GM10248 (cell line): ENCODE measurements at regions of chr20 and their contacts with region 1.

Region 1: GRCh38 chr20:2005831-2006426 is 12.1 kb upstream of the PDYN start:
- DNase-seq: peak; percentile 61
- CTCF ChIP-seq: no peak

Region 2: GRCh38 chr20:1965520-1966351 is 40.2 kb before region 1 on chr20:
- CTCF ChIA-PET with region 1: interaction called, 10 read pairs
- POLR2A ChIA-PET with region 1: no interaction called
- DNase-seq: peak; percentile 84
- CTCF ChIP-seq: peak; percentile 91

Region 3: DNA sequence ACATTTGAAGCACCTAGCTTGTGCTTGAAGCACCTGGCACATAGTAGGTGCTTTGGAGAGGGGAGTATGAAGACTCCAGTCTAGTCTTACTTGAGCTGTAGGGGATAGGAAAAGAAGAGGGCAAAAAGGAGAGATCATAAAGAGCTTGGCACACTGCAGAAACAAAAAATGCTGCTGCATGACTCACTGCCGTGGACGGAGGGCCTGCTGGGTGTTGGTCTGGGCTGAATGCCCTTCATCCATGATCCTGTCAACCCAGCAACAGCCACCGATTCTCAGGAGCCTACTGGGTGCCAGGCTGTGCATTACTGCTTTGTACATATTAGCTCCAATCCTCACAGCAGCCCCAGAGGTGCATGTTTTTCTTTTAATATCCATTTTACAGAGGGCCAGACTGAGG is 18.1 kb before region 1 on chr20:
- CTCF ChIA-PET with region 1: interaction called, 11 read pairs
- POLR2A ChIA-PET with region 1: no interaction called
- DNase-seq: no peak
- CTCF ChIP-seq: no peak

Region 4: DNA sequence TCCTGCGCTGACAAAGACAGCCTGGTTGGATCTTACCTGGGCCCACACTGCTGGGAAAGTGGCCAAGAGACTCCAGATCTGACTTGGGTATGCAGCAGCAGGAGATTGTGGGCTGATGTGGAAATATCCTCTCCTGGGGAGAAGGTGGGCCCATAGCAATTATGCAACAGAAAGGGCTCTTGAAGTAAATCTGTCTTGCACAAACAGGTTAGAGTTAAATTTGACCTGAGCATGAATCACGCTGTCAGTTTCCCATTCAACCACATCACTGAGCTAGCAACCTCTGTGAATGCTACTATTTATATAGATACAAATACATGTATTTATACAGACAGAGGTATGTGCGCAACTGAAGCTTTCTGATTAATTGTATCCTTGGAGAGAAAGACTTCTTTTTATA is 16.2 kb after region 1 on chr20:
- CTCF ChIA-PET with region 1: interaction called, 23 read pairs
- POLR2A ChIA-PET with region 1: no interaction called
- DNase-seq: no peak
- CTCF ChIP-seq: no peak

Region 5: DNA sequence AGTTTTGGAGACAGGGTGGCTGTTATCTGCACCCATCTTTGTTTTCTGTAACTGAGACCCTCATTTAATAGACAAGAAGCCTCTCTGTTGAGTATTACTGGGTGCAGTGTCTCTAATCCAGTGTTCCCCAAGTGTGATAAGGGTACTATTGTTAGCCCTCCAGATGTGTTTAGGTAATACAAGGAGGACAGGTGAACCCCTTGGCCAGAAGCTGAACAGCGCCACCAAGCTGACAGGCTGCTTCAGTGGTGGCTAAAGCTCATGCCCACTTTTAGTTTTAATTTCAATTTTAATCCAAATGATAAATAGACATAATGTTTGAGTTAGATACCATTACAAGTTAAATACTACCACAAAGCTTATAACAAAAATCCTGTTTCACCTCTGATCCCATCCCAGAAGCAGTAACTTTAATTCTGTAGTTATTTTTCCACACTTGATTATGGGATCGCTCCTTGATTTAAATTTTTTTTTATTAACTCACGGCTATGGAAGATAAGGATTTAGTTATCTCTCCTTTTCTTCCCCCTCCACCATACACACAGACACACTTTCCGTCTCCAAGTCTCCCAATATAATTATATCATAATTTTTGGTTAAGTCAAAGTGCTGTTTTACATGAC is 87.3 kb after region 1 on chr20:
- CTCF ChIA-PET with region 1: interaction called, 10 read pairs
- POLR2A ChIA-PET with region 1: no interaction called
- DNase-seq: peak; percentile 27
- CTCF ChIP-seq: peak; percentile 68